ENCODE measurements at regions of chr17 and their contacts with region 1.

Region 1: DNA sequence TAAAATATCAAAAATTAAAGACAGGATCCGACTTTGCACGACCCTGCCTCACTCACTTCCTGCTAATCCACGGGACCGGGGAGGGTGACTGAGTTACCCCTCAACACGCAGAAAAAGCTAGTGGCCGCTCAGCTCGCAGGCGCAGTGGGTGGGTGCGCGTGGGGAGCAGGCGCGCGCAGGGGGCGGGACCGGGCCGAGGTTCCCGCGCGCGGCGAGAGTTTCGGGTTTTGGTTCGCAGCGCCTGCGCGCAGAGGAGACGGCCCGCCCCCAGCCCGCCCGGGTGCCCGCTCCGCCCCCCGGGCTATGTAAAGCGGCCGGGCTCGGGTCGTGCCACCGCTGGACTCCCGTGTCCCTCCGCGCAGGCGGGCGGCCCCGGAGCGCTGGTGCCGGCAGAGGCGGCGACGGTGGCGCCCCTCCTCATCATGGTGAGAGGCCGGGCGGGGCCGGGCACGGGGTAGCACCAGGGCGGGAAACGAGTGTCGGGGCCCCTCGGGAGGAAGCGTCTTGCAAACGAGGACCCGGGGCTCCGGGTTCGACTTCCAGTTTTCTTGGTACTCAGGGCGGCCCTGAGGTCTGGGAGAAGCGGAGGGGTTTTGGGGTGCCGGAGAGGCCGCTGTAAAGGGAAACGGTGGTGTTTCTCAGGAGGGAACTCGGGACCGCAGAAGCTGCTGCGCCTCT is at the start of gene CNP:
- DNase-seq: peak; percentile 92
- ATAC-seq: peak; percentile 85
- H3K4me3 Mint-ChIP-seq: peak within 1 kb of the TSS; percentile 82
- H3K27ac Mint-ChIP-seq: peak within 1 kb of the TSS; percentile 72
- H3K4me1 Mint-ChIP-seq: peaks cover 43% of the 10 kb centered on the region
- H3K27me3 Mint-ChIP-seq: no peaks in the 10 kb centered on the region
- CTCF ChIP-seq: no peak
- total RNA-seq, gene CNP: 47.2 and 48.0 TPM in 2 replicates

Region 2: GRCh38 chr17:41548844-41549595 is 417.6 kb before region 1 on chr17:
- CTCF ChIA-PET with region 1: no interaction called
- POLR2A ChIA-PET with region 1: no interaction called
- intact Hi-C with region 1: no loop called
- DNase-seq: peak; percentile 50
- ATAC-seq: peak; percentile 87
- H3K4me3 Mint-ChIP-seq: peak overlapping the region; percentile 44
- H3K27ac Mint-ChIP-seq: no peak overlapping the region
- H3K4me1 Mint-ChIP-seq: peaks cover 8% of the 10 kb centered on the region
- H3K27me3 Mint-ChIP-seq: peaks cover 39% of the 10 kb centered on the region
- CTCF ChIP-seq: no peak

Region 3: GRCh38 chr17:41918314-41919164 is 48.1 kb before region 1 on chr17 and contains the start of gene ACLY:
- CTCF ChIA-PET with region 1: no interaction called
- POLR2A ChIA-PET with region 1: interaction called, 4 read pairs
- intact Hi-C with region 1: loop called (anchors 2 kb)
- DNase-seq: peak; percentile 96
- ATAC-seq: peak; percentile 99
- H3K4me3 Mint-ChIP-seq: peak within 1 kb of the TSS; percentile 92
- H3K27ac Mint-ChIP-seq: peak within 1 kb of the TSS; percentile 84
- H3K4me1 Mint-ChIP-seq: peaks cover 31% of the 10 kb centered on the region
- H3K27me3 Mint-ChIP-seq: no peaks in the 10 kb centered on the region
- CTCF ChIP-seq: no peak
- total RNA-seq, gene ACLY: 133 and 143 TPM in 2 replicates

Region 4: DNA sequence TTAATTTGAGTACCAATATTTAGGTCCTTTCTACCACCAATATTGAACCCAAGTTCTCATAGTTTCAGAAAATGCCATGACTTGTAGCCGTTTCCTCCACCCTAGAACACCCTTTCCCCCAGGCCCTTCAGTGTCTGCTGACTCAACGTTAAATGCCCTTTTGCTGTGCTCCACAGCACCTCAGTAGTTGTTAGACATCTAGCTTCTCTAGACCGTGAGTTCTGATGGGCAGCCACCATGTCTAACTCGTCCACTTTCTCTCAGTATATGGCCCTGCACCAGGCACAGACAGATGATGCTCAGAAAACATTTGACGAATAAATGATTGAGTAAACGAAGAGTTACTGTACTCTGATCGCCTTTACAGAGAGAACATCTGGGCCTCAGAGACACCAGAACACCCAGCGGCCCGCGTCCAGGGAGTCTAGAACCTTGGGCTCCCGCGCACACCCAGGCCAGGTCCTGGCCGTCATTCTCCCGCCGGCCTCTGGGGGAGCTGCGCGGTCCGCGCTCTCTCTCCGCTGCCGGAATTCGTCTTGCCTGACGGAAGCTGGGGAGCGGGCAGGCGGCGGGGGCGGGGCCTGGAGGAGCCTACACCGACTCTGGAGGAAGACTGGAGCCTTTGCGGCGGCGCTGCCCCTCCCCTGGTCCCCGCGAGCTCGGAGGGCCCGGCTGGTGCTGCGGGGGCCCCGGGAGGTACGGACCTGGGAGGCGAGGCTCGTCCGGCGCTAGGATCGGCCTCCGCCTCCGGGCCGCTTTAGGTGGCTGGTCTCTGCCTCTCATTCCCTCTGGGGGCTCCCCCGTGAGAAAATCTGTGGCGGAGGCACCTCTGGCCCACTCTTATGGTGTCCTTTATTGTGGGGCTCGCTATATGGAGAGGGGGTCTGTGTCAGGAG is 53.2 kb after region 1 on chr17 and contains the start of gene NKIRAS2:
- CTCF ChIA-PET with region 1: interaction called, 8 read pairs
- POLR2A ChIA-PET with region 1: interaction called, 35 read pairs
- intact Hi-C with region 1: loop called (anchors 1 kb)
- DNase-seq: peak; percentile 91
- ATAC-seq: peak; percentile 77
- H3K4me3 Mint-ChIP-seq: peak within 1 kb of the TSS; percentile 100
- H3K27ac Mint-ChIP-seq: peak within 1 kb of the TSS; percentile 82
- H3K4me1 Mint-ChIP-seq: peaks cover 70% of the 10 kb centered on the region
- H3K27me3 Mint-ChIP-seq: no peaks in the 10 kb centered on the region
- CTCF ChIP-seq: no peak
- total RNA-seq, gene NKIRAS2: 23.9 and 25.8 TPM in 2 replicates

Region 5: DNA sequence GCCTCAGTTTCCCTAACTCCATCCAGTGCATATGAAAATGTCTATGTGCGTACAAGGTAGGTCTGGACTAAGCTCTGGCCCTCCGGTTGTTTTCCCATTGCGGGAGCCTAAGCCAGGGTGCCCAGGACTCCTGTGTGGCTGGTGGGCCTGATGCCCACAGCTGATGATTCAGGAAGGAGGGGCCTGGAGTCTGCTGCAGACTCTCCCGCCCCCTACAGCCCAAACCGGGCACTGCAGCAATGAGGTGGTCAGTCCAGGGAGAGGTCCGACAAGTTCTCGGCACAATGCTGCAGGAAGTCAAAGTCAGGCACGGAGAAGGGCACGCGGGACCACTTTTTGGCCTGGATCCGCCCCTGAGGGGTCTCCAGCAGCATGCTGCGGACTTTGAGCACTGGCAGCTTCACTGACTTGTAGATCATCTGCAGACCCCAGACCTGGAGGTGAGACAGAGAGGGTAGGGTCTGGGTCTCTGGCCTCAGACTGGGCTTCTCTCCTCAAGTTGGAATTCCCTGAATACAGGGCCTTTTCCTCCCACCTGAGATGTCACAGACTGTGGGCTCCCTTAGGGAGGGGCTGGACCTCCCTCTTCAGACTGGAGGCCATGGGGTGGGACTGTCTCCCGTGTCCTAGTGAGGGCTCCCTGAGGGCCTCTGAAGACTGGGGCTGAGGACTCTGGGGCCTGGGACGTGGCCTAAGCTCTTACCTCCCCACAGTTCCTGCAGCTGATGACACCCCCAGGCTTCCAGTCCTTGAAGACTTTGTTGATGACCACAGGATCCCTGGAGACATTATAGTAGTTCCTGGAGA is 135.1 kb after region 1 on chr17:
- CTCF ChIA-PET with region 1: interaction called, 21 read pairs
- POLR2A ChIA-PET with region 1: interaction called, 5 read pairs
- intact Hi-C with region 1: loop called (anchors 1 kb)
- DNase-seq: peak; percentile 67
- ATAC-seq: peak; percentile 60
- H3K4me3 Mint-ChIP-seq: no peak overlapping the region
- H3K27ac Mint-ChIP-seq: no peak overlapping the region
- H3K4me1 Mint-ChIP-seq: peaks cover 14% of the 10 kb centered on the region
- H3K27me3 Mint-ChIP-seq: no peaks in the 10 kb centered on the region
- CTCF ChIP-seq: no peak

Region 6: DNA sequence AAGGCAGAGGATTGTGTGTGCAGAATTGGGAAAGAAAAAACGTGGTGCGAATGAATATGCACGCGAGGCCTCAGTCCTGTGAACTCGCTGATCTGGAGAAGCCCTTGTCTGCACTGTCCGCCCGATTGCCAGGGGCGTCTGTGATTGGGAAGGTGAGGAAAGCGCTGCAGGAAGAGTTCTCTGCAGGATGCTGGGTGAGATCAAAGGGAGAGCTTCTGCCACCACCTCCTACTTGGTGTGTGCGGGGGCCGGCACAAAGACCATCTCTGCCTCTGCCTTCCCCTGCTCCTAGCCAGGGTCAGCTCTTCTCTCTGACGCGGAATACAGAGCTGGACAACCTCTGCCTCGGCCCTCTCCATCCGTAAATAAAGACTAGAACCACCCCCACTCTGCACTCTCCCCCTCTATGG is 189.0 kb after region 1 on chr17:
- CTCF ChIA-PET with region 1: no interaction called
- POLR2A ChIA-PET with region 1: no interaction called
- intact Hi-C with region 1: loop called (anchors 1 kb)
- DNase-seq: no peak
- ATAC-seq: no peak
- H3K4me3 Mint-ChIP-seq: peak overlapping the region; percentile 95
- H3K27ac Mint-ChIP-seq: peak overlapping the region; percentile 92
- H3K4me1 Mint-ChIP-seq: peaks cover 37% of the 10 kb centered on the region
- H3K27me3 Mint-ChIP-seq: no peaks in the 10 kb centered on the region
- CTCF ChIP-seq: no peak

Region 7: DNA sequence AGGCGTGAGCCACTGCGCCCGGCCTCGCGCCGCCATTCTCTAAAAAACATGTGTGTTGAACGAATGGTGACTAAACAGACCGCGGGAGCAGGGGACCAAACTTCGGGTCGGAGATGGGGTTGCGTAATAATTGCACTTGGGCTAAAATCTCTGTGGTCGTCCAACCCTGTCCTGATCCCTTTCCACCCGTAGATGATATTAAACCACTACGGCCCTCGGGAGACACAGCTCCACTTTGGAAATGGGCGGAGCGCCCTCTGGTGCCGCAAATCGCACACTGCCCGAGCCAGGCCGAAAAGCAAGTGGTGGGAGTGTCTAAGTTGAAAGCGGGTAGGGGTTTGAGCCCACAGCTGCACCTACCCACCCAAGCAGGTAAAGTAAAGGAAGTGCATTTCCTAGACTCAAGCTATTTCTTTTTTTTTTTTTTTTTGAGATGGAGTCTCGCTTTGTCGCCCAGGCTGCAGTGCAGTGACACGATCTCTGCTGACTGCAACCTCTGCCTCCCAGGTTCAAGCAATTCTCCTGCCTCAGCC is 439.4 kb after region 1 on chr17:
- CTCF ChIA-PET with region 1: interaction called, 3 read pairs
- POLR2A ChIA-PET with region 1: no interaction called
- intact Hi-C with region 1: loop called (anchors 2 kb)
- DNase-seq: peak; percentile 77
- ATAC-seq: peak; percentile 83
- H3K4me3 Mint-ChIP-seq: no peak overlapping the region
- H3K27ac Mint-ChIP-seq: no peak overlapping the region
- H3K4me1 Mint-ChIP-seq: peaks cover 8% of the 10 kb centered on the region
- H3K27me3 Mint-ChIP-seq: peaks cover 3% of the 10 kb centered on the region
- CTCF ChIP-seq: no peak

Measured in activated B cell treated with CpG ODN at 0.5 μM for 24 hours (primary cell).